CD4-positive, alpha-beta memory T cell (primary cell): ENCODE measurements at regions of chr2 and their contacts with region 1.

Region 1: DNA sequence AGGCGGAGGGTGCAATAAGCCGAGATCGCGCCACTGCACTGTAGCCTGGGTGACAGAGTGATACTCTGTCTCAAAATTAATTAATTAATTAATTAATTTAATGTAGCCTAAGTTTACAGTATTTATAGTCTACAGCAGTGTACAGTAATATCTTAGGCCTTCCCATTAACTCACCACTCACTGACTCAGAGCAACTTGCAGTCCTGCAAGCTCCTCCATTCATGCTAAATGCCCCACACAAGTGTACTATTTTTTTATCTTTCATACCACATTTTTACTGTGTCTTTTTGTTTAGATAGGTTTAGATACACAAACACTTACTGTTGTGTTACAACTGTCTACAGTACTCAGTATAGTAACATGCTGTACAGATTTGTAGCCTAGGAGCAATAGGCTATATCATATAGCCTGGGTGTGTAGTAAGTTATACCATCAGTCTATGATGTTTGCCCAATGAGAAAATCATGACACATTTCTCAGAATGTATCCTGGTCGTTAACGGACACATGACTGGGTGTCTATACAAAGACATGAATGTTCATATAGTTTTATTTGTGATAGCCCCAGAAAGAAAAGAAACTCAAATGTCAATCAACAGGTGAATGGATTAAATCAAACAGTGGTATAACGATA is 15.8 kb upstream of the RNU2-63P start:
- DNase-seq: no peak
- H3K4me3 ChIP-seq: no peak overlapping the region
- H3K4me3 Mint-ChIP-seq: no peak overlapping the region
- H3K27ac ChIP-seq: no peak overlapping the region
- H3K27ac Mint-ChIP-seq: no peak overlapping the region
- H3K4me1 ChIP-seq: no peaks in the 10 kb centered on the region
- H3K4me1 Mint-ChIP-seq: peaks cover 5 to 17% (median 11%) of the 10 kb centered on the region in 4 donors
- H3K27me3 ChIP-seq: no peaks in the 10 kb centered on the region
- H3K27me3 Mint-ChIP-seq: no peaks in the 10 kb centered on the region

Region 2: GRCh38 chr2:88049622-88050021 is 17.4 kb after region 1 on chr2:
- CTCF ChIA-PET with region 1: interaction called, 5 read pairs
- POLR2A ChIA-PET with region 1: interaction called, 3 read pairs
- intact Hi-C with region 1: loop called (anchors 1 kb)
- DNase-seq: no peak
- H3K4me3 ChIP-seq: no peak overlapping the region
- H3K4me3 Mint-ChIP-seq: no peak overlapping the region
- H3K27ac ChIP-seq: no peak overlapping the region
- H3K27ac Mint-ChIP-seq: peak overlapping the region in 4 of 7 donors; percentile 1 to 75 (median 36)
- H3K4me1 ChIP-seq: peaks cover 25% of the 10 kb centered on the region
- H3K4me1 Mint-ChIP-seq: peaks cover 35 to 62% (median 50%) of the 10 kb centered on the region in 4 donors
- H3K27me3 ChIP-seq: no peaks in the 10 kb centered on the region
- H3K27me3 Mint-ChIP-seq: no peaks in the 10 kb centered on the region